Esophagus squamous epithelium (tissue), 5 donors: ENCODE measurements at regions of chr2 and their contacts with region 1.

Region 1: GRCh38 chr2:191691016-191691735 is 13.2 kb downstream of the NABP1 start:
- DNase-seq: no peak
- H3K4me3 ChIP-seq: no peak overlapping the region
- H3K27ac ChIP-seq: no peak overlapping the region
- H3K4me1 ChIP-seq: peaks cover 0 to 47% (median 21%) of the 10 kb centered on the region in 3 donors
- H3K27me3 ChIP-seq: no peaks in the 10 kb centered on the region
- CTCF ChIP-seq: peak; percentile 61 to 87 (median 72)
- POLR2A ChIP-seq: no peak

Region 2: GRCh38 chr2:191274413-191274815 is 416.8 kb before region 1 on chr2:
- intact Hi-C with region 1: no loop called
- DNase-seq: no peak
- H3K4me3 ChIP-seq: no peak overlapping the region
- H3K27ac ChIP-seq: no peak overlapping the region
- H3K4me1 ChIP-seq: peaks cover 0 to 5% (median 3%) of the 10 kb centered on the region in 3 donors
- H3K27me3 ChIP-seq: no peaks in the 10 kb centered on the region
- CTCF ChIP-seq: no peak
- POLR2A ChIP-seq: no peak

Region 3: GRCh38 chr2:191566344-191566743 is 124.8 kb before region 1 on chr2:
- intact Hi-C with region 1: loop called (anchors 5 kb)
- DNase-seq: no peak
- H3K4me3 ChIP-seq: no peak overlapping the region
- H3K27ac ChIP-seq: no peak overlapping the region
- H3K4me1 ChIP-seq: peaks cover 0 to 10% (median 0%) of the 10 kb centered on the region in 3 donors
- H3K27me3 ChIP-seq: peaks cover 0 to 4% (median 0%) of the 10 kb centered on the region in 4 donors
- CTCF ChIP-seq: peak; percentile 32 to 78 (median 73)
- POLR2A ChIP-seq: no peak